Ovary (tissue), 10 donors: ENCODE measurements at regions of chr10 and their contacts with region 1.

Region 1: DNA sequence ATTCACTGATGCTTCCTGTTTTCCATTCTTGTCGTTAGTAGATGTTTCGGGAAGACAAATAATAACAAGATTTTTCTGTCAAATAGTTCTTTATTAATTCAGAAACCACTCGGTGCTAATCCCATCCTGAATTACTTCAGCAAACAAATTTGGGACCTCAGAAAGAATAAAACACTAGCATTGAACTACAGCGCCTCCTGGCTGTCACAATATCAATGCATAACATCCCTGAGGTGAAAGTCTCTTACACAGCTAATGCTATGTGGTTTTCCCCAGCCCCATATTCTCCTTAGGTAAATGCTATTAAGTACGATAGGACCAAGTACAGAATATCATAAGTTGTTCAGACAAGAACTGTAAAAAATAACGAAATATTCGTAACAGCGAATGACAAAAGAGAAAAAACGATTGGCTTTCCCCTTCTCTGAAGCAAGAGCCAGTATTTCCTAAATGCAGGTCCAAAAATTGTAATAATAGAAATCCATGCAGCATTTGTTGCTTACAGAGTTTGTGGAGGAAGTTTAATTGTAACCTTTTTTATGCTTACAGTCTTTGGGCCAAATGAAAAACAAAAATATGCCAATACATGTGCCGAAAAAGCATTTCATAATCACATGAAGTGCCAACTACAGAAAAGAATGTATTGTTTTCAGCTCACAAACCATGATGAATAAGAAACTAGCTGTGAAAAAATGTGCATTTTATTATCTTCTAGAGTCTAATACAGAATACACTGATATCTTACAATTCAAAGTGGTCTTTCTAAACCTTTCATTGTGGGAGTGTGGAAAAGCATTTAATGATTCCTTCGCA is 47.3 kb downstream of the MYPN start:
- DNase-seq: peak in 4 of 5 donors; percentile 47 to 75 (median 56)
- H3K4me3 ChIP-seq: no peak overlapping the region
- H3K27ac ChIP-seq: no peak overlapping the region
- H3K4me1 ChIP-seq: peaks cover 8% of the 10 kb centered on the region
- H3K27me3 ChIP-seq: no peaks in the 10 kb centered on the region
- CTCF ChIP-seq: peak; percentile 59 to 74 (median 69)
- EP300 ChIP-seq: no peak
- POLR2A ChIP-seq: no peak

Region 2: DNA sequence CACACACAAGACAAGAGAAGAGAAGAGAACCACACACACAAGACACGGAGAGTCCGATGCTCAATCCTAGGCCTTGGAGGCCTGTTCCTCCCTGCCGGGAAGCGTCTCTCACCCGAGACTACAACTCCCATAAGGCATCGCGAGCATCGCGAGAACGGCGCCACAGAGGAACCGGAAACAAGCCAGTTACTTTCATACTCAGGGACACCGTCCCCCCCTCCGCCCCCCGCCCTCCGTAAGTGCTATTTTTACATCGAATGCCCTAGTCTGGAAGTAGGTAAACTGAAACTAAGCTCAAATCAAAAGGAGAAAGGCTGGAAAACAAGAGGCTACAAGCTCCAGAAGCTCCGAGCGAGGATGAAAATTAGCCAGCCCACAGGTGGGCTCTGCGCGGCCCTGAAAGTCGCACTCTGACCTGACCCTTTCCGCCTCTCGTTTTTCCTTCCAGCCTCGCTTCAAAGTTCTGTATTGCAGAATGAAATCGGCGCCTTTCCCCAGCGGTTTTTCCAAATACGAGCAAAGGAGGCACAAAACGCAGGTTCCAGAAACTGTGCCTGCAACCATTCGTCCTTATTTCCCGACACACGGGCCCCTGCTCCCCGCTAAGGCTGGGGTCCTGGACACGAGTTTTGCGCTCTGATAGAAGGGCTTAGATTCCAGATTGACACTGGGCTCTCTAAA is 307.1 kb before region 1 on chr10:
- intact Hi-C with region 1: loop called in 1 of 4 experiments (anchors 10 kb)
- DNase-seq: peak; percentile 95 to 98 (median 98)
- H3K4me3 ChIP-seq: peak overlapping the region; percentile 87
- H3K27ac ChIP-seq: peak overlapping the region; percentile 87 to 93
- H3K4me1 ChIP-seq: no peaks in the 10 kb centered on the region
- H3K27me3 ChIP-seq: no peaks in the 10 kb centered on the region
- CTCF ChIP-seq: no peak
- EP300 ChIP-seq: no peak
- POLR2A ChIP-seq: peak; percentile 57

Region 3: DNA sequence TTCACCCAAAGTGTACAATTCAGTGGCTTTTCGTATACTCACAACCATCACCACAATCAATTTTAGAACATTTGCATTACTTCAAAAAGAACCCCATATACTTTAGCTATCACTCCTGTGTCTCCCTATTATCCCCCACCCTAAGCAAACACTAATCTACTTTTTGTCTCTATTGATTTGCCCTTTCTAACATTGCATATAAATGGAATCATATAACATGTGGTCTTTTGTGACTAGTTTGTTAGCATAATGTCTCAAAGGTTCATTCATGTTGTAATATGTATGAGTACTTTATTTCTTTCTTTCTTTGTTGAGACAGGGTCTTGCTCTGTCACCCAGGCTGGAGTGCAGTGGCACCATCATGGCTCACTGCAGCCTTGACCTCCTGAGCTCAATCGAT is 297.6 kb before region 1 on chr10:
- intact Hi-C with region 1: loop called in 2 of 4 experiments (anchors 5 to 10 kb)
- DNase-seq: no peak
- H3K4me3 ChIP-seq: no peak overlapping the region
- H3K27ac ChIP-seq: no peak overlapping the region
- H3K4me1 ChIP-seq: peaks cover 1% of the 10 kb centered on the region
- H3K27me3 ChIP-seq: no peaks in the 10 kb centered on the region
- CTCF ChIP-seq: no peak
- EP300 ChIP-seq: no peak
- POLR2A ChIP-seq: no peak

Region 4: DNA sequence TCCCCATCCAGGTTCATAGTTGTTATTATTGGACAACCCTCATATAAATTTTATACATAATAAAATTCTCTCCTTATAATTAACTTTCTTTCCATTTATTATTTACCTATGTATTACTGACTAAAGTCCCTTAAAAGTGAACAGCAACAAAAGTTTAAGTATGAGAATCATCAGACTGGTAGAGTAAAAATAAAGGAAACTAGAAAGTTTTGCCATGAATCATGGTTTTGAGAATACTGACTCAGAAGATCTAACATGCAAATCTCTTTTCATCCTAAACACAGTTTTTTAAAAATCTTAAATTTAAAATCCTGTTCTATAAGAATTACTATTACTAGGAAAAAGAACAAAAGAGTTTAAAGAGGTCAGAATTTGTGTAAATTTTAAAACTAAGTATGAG is 113.5 kb before region 1 on chr10:
- intact Hi-C with region 1: no loop called
- DNase-seq: no peak
- H3K4me3 ChIP-seq: no peak overlapping the region
- H3K27ac ChIP-seq: no peak overlapping the region
- H3K4me1 ChIP-seq: no peaks in the 10 kb centered on the region
- H3K27me3 ChIP-seq: no peaks in the 10 kb centered on the region
- CTCF ChIP-seq: no peak
- EP300 ChIP-seq: no peak
- POLR2A ChIP-seq: no peak

Region 5: DNA sequence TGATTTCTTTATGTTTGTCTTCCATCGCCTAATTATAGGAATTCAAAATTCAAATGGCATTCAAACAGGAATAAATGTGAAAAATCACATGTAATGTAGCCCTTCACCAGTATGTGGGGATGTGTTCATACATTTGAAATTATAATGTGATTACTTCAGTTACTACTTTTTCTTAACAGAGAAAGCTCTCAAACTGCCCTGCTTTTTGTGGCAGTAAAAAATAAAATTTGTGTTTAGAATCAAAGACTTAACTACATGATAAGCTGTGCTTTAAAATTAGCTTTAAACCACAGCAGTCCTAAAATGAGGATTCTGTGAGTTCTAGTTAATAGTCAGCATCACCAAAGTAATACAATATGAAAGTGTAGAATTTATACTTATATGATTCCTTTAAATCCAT is 73.7 kb before region 1 on chr10:
- intact Hi-C with region 1: loop called in 2 of 4 experiments (anchors 5 kb)
- DNase-seq: no peak
- H3K4me3 ChIP-seq: no peak overlapping the region
- H3K27ac ChIP-seq: no peak overlapping the region
- H3K4me1 ChIP-seq: no peaks in the 10 kb centered on the region
- H3K27me3 ChIP-seq: no peaks in the 10 kb centered on the region
- CTCF ChIP-seq: no peak
- EP300 ChIP-seq: no peak
- POLR2A ChIP-seq: no peak

Region 6: DNA sequence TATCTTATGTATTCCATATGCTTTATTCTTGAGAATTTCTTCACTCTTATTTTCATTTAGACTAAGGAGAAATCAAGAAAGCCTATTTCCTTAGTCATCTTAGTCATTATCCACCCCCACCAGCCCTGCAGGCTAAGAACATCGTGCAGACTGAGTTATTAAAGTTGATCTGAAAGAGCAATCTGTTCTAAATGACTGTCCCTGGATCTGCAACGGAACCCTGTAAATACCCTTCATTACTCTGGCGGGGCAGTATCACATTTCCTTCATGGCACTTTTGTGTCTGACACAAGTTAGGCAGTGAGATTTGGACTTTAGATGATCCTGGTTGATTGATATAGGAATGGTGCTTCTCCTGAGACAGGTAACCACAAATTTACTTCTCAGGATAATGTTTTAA is 50.8 kb before region 1 on chr10:
- intact Hi-C with region 1: no loop called
- DNase-seq: no peak
- H3K4me3 ChIP-seq: no peak overlapping the region
- H3K27ac ChIP-seq: no peak overlapping the region
- H3K4me1 ChIP-seq: no peaks in the 10 kb centered on the region
- H3K27me3 ChIP-seq: no peaks in the 10 kb centered on the region
- CTCF ChIP-seq: no peak
- EP300 ChIP-seq: no peak
- POLR2A ChIP-seq: no peak